ENCODE measurements at regions of chr17 and their contacts with region 1.

Region 1: GRCh38 chr17:78013683-78014467 is 55.4 kb downstream of the TNRC6C start:
- DNase-seq: peak; percentile 62
- ATAC-seq: peak; percentile 80
- H3K4me3 Mint-ChIP-seq: no peak overlapping the region
- H3K27ac Mint-ChIP-seq: no peak overlapping the region
- H3K4me1 Mint-ChIP-seq: peaks cover 24% of the 10 kb centered on the region
- H3K27me3 Mint-ChIP-seq: no peaks in the 10 kb centered on the region

Region 2: GRCh38 chr17:77542551-77543490 is 471.1 kb before region 1 on chr17:
- CTCF ChIA-PET with region 1: interaction called, 18 read pairs
- POLR2A ChIA-PET with region 1: no interaction called
- intact Hi-C with region 1: loop called (anchors 1 to 2 kb)
- DNase-seq: peak; percentile 83
- ATAC-seq: peak; percentile 90
- H3K4me3 Mint-ChIP-seq: no peak overlapping the region
- H3K27ac Mint-ChIP-seq: no peak overlapping the region
- H3K4me1 Mint-ChIP-seq: no peaks in the 10 kb centered on the region
- H3K27me3 Mint-ChIP-seq: peaks cover 3% of the 10 kb centered on the region

Region 3: DNA sequence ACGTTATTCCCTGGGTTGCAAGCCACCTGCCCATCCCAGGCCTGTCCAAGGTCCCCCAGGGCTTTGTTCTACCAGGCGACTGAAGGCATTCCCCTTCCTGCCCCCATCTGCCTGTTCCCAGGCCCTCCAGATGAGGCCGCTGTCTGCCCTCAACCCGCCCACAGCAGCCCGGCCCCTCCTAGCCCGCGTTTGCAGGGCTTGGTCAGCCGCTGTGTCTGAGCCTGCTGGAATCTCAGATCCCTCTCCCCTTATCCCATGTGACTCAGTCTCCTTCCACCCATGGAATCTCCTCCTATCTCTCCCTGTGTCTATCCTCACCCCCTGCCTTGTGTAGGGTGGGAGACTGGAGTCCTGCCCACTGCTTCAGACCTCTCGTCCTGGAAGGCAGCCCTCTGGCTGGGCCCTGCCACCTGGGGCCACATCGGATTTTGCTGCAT is 241.4 kb before region 1 on chr17:
- CTCF ChIA-PET with region 1: interaction called, 31 read pairs
- POLR2A ChIA-PET with region 1: no interaction called
- intact Hi-C with region 1: loop called (anchors 1 kb)
- DNase-seq: peak; percentile 84
- ATAC-seq: peak; percentile 95
- H3K4me3 Mint-ChIP-seq: no peak overlapping the region
- H3K27ac Mint-ChIP-seq: no peak overlapping the region
- H3K4me1 Mint-ChIP-seq: peaks cover 9% of the 10 kb centered on the region
- H3K27me3 Mint-ChIP-seq: no peaks in the 10 kb centered on the region

Region 4: GRCh38 chr17:77963441-77963840 is 50.4 kb before region 1 on chr17:
- CTCF ChIA-PET with region 1: interaction called, 15 read pairs
- POLR2A ChIA-PET with region 1: interaction called, 3 read pairs
- intact Hi-C with region 1: loop called (anchors 2 to 5 kb)
- DNase-seq: peak; percentile 52
- ATAC-seq: no peak
- H3K4me3 Mint-ChIP-seq: peak overlapping the region; percentile 22
- H3K27ac Mint-ChIP-seq: no peak overlapping the region
- H3K4me1 Mint-ChIP-seq: peaks cover 69% of the 10 kb centered on the region
- H3K27me3 Mint-ChIP-seq: no peaks in the 10 kb centered on the region

Region 5: GRCh38 chr17:77974396-77974795 is 39.5 kb before region 1 on chr17:
- CTCF ChIA-PET with region 1: interaction called, 23 read pairs
- POLR2A ChIA-PET with region 1: no interaction called
- intact Hi-C with region 1: no loop called
- DNase-seq: no peak
- ATAC-seq: no peak
- H3K4me3 Mint-ChIP-seq: no peak overlapping the region
- H3K27ac Mint-ChIP-seq: no peak overlapping the region
- H3K4me1 Mint-ChIP-seq: peaks cover 68% of the 10 kb centered on the region
- H3K27me3 Mint-ChIP-seq: no peaks in the 10 kb centered on the region

Region 6: DNA sequence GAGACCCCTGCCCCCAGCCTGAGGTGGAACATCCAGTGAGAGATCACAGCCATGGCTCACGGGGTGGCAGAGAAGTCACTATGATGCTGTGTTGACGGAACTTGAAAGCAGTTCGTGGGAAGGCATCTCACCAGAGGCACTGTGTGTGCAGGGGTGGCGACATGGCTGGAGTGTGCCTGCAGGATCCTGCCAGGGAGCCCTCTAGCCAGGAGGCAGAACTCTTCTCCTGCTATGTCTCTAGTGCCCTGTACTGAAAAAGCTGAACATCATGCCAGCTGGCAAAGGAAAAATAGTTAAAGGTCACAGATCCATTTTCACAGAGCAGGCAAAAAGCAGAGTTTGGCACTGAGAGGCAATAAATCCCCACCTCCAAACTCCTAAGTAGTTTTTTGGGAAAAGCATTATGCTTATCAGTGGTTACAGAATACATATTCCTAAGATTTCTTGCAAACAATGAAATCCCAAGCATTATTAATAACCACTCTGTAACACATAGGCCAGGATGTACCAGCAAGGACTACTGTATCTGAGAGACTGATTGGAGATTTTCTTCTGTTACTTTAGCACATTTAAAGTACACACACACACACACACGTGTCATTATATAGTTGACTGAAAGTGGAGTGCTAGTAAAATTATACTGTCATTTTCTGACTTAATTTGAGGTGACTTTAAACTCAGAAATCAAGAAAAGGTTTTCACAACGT is 18.6 kb before region 1 on chr17:
- CTCF ChIA-PET with region 1: interaction called, 10 read pairs
- POLR2A ChIA-PET with region 1: no interaction called
- intact Hi-C with region 1: no loop called
- DNase-seq: peak; percentile 57
- ATAC-seq: peak; percentile 94
- H3K4me3 Mint-ChIP-seq: no peak overlapping the region
- H3K27ac Mint-ChIP-seq: peak overlapping the region; percentile 68
- H3K4me1 Mint-ChIP-seq: peaks cover 60% of the 10 kb centered on the region
- H3K27me3 Mint-ChIP-seq: no peaks in the 10 kb centered on the region

Region 7: GRCh38 chr17:78026381-78026780 is 12.5 kb after region 1 on chr17:
- CTCF ChIA-PET with region 1: interaction called, 20 read pairs
- POLR2A ChIA-PET with region 1: no interaction called
- intact Hi-C with region 1: no loop called
- DNase-seq: no peak
- ATAC-seq: no peak
- H3K4me3 Mint-ChIP-seq: no peak overlapping the region
- H3K27ac Mint-ChIP-seq: peak overlapping the region; percentile 17
- H3K4me1 Mint-ChIP-seq: peaks cover 25% of the 10 kb centered on the region
- H3K27me3 Mint-ChIP-seq: no peaks in the 10 kb centered on the region

Region 8: DNA sequence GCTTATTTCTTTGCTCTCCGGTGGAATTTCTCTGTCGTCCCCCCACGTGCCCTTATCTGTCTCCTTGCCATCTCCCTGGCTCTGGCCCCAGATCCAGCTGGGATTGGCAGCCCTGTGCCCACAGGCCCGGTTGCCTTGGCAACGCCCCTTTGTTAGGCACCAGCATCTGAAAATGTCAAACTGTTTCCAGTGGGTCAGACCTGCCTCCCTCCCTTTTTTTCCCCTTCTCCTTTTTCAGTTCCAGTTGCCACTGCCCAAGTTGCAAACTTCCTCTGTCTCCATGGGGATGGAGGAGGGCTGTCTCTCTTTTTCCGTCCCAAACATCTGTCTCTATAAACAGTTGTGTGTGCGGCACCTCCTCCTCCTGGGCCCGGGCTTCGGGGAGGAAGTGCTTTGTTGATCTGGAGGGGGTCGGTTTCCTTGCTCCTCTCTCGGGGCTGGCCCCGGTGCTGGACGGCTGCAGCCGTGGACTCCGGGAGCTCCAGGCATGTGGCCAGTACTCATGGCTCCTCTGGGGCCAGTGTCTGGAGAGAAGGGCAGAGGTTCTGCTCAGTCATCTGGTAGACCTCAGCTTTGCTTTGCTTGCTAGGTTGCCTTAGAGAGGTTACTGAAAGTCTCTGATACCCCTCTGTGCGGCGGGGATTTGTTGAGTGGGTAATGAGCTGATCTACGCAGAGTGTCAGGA is 310.7 kb after region 1 on chr17:
- CTCF ChIA-PET with region 1: no interaction called
- POLR2A ChIA-PET with region 1: no interaction called
- intact Hi-C with region 1: no loop called
- DNase-seq: peak; percentile 43
- ATAC-seq: peak; percentile 68
- H3K4me3 Mint-ChIP-seq: no peak overlapping the region
- H3K27ac Mint-ChIP-seq: peak overlapping the region; percentile 76
- H3K4me1 Mint-ChIP-seq: peaks cover 25% of the 10 kb centered on the region
- H3K27me3 Mint-ChIP-seq: no peaks in the 10 kb centered on the region

Measured in activated CD4-positive, alpha-beta T cell treated with anti-CD3 and anti-CD28 coated beads for 36 hours (primary cell).